HepG2 (cell line): ENCODE measurements at regions of chr4 and their contacts with region 1.

Region 1: DNA sequence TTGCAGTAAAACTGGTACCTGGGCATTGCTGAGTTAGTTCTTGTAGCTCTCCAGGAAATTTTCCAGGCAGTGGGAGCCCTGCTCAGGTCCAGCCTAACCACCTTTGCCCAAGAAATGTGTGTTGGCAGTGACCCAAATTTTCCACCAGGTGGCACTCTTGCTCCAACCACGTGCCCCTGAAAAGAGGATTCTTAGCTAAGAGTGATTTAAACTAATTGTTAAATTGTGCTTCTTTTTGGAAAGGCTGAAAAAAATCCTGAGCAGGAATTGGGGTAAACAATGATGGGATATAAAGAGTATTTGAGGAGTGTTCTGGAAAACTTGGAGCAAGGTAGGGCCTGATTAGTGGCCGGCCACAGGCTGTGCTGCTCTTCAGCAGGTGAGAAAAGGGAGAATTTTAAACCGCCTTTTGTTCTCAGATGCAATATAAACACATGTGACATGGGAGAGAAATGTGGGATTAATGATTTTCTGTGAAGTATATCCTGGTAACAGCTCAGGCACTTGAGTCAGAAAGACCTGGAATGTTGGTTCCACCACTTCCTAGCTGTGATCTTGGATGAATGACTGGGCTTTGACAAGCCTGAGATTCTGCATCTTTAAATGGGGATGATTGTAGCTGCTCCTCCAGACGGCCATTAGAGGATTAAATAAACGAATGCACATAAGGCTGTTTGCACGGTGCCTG is 219.6 kb downstream of the PTTG2 start:
- DNase-seq: peak; percentile 65
- ATAC-seq: peak; percentile 88
- H3K4me3 ChIP-seq: no peak overlapping the region
- H3K27ac ChIP-seq: no peak overlapping the region
- H3K4me1 ChIP-seq: peaks cover 51% of the 10 kb centered on the region
- H3K27me3 ChIP-seq: no peaks in the 10 kb centered on the region
- CTCF ChIP-seq: peak; percentile 91
- EP300 ChIP-seq: peak in 1 of 2 experiments; percentile 45; a peak in 1 of 4 replicates
- POLR2A ChIP-seq: no peak
- RAD21 ChIP-seq: peak; percentile 95

Region 2: DNA sequence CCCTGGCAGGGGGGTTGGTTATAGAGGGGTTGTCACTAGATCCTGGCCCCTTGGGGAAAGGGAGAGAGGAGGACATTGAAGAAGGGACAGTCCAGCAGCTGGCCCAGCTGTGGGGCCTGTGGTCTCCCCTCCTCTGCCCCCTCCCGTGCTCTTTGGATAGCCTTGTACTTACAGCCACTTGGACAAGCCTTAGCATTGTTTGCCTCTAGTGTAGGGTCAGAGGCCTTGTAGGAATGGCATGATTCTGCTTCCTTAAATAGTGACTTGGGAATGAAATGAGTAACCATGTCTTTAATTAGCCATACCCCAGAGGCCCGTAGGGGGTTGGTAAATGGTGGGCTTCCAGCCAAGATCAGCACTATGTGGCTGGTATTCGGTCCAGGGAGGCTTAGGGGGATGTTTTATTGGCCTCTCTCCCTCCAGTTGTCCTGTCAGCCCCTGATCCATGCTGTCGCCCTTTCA is 10.9 kb after region 1 on chr4:
- CTCF ChIA-PET with region 1: no interaction called
- POLR2A ChIA-PET with region 1: no interaction called
- in situ Hi-C with region 1: no loop called
- intact Hi-C with region 1: no loop called
- DNase-seq: no peak
- ATAC-seq: no peak
- H3K4me3 ChIP-seq: no peak overlapping the region
- H3K27ac ChIP-seq: no peak overlapping the region
- H3K4me1 ChIP-seq: peaks cover 33% of the 10 kb centered on the region
- H3K27me3 ChIP-seq: peaks cover 0 to 7% of the 10 kb centered on the region in 2 experiments; a peak in 2 of 5 replicates
- CTCF ChIP-seq: no peak
- EP300 ChIP-seq: no peak
- POLR2A ChIP-seq: no peak
- RAD21 ChIP-seq: no peak

Region 3: GRCh38 chr4:38223782-38224236 is 44.0 kb after region 1 on chr4:
- CTCF ChIA-PET with region 1: no interaction called
- POLR2A ChIA-PET with region 1: no interaction called
- in situ Hi-C with region 1: no loop called
- intact Hi-C with region 1: no loop called
- DNase-seq: peak; percentile 81
- ATAC-seq: peak; percentile 97
- H3K4me3 ChIP-seq: peak overlapping the region; percentile 39 to 53 (median 42); a peak in 5 of 6 replicates
- H3K27ac ChIP-seq: peak overlapping the region; percentile 68
- H3K4me1 ChIP-seq: peaks cover 45% of the 10 kb centered on the region
- H3K27me3 ChIP-seq: no peaks in the 10 kb centered on the region
- CTCF ChIP-seq: no peak
- EP300 ChIP-seq: peak in 1 of 2 experiments; percentile 84; a peak in 2 of 4 replicates
- POLR2A ChIP-seq: 0 out of 4 replicates have a peak, but pooled peaks of 1 of the 2 experiments have one; percentile 25
- RAD21 ChIP-seq: no peak

Region 4: DNA sequence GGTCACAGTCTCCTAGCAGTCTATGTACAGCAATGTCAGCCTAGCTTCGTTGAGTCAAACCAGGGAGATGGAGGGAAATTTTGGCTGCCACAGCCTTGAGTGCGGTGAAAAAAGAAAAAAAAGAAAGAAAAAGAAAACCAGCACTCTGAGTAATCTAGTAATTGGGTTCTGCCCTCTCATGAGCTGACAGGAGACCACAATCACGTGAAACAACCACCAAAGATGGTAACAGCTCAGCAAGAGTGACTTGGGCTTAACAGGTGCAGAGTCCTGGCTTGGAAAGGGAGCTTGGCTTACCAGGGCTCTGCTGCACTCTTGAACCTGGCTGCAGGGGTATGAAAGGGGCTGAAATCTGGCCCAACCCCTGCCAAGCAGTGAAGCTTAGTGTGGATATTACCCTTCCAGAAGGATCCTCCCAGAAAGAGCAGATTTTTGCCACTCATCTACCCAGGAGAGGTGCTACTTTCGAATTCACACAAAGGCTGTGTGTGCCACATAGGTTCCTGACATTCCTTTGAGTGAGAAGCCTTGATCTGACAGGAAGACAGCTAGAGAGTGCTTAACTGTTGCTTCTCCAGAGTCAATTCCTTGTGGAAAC is 130.7 kb after region 1 on chr4:
- CTCF ChIA-PET with region 1: no interaction called
- POLR2A ChIA-PET with region 1: no interaction called
- in situ Hi-C with region 1: loop called (anchors 5 kb)
- intact Hi-C with region 1: no loop called
- DNase-seq: no peak
- ATAC-seq: peak; percentile 68
- H3K4me3 ChIP-seq: no peak overlapping the region
- H3K27ac ChIP-seq: no peak overlapping the region
- H3K4me1 ChIP-seq: peaks cover 29% of the 10 kb centered on the region
- H3K27me3 ChIP-seq: no peaks in the 10 kb centered on the region; a peak in 1 of 5 replicates
- CTCF ChIP-seq: no peak
- EP300 ChIP-seq: no peak
- POLR2A ChIP-seq: no peak
- RAD21 ChIP-seq: no peak

Region 5: GRCh38 chr4:38319456-38320342 is 139.9 kb after region 1 on chr4:
- CTCF ChIA-PET with region 1: no interaction called
- POLR2A ChIA-PET with region 1: no interaction called
- in situ Hi-C with region 1: loop called (anchors 5 kb)
- intact Hi-C with region 1: loop called (anchors 1 kb)
- DNase-seq: peak; percentile 75
- ATAC-seq: peak; percentile 86
- H3K4me3 ChIP-seq: 0 out of 6 replicates have a peak overlapping the region, but pooled peaks of 1 of the 3 experiments have one; percentile 8
- H3K27ac ChIP-seq: peak overlapping the region; percentile 28
- H3K4me1 ChIP-seq: peaks cover 33% of the 10 kb centered on the region
- H3K27me3 ChIP-seq: no peaks in the 10 kb centered on the region
- CTCF ChIP-seq: peak; percentile 95
- EP300 ChIP-seq: no peak
- POLR2A ChIP-seq: no peak
- RAD21 ChIP-seq: peak; percentile 93

Region 6: GRCh38 chr4:38730830-38731646 is 551.2 kb after region 1 on chr4:
- CTCF ChIA-PET with region 1: interaction called, 38 read pairs
- POLR2A ChIA-PET with region 1: no interaction called
- in situ Hi-C with region 1: loop called (anchors 5 kb)
- intact Hi-C with region 1: loop called (anchors 1 kb)
- DNase-seq: peak; percentile 66
- ATAC-seq: peak; percentile 93
- H3K4me3 ChIP-seq: peak overlapping the region in 1 of 3 experiments; percentile 30; a peak in 1 of 6 replicates
- H3K27ac ChIP-seq: no peak overlapping the region
- H3K4me1 ChIP-seq: peaks cover 27% of the 10 kb centered on the region
- H3K27me3 ChIP-seq: no peaks in the 10 kb centered on the region
- CTCF ChIP-seq: peak; percentile 95
- EP300 ChIP-seq: no peak
- POLR2A ChIP-seq: no peak
- RAD21 ChIP-seq: peak; percentile 89